Naive thymus-derived CD4-positive, alpha-beta T cell (primary cell): ENCODE measurements at regions of chr1 and their contacts with region 1.

Region 1: GRCh38 chr1:167401260-167401873 is 117.0 kb downstream of the CD247 start:
- DNase-seq: peak in 8 of 9 donors; percentile 28 to 55 (median 40)
- ATAC-seq: peak; percentile 75
- H3K4me3 ChIP-seq: no peak overlapping the region
- H3K4me3 Mint-ChIP-seq: no peak overlapping the region
- H3K27ac ChIP-seq: no peak overlapping the region
- H3K27ac Mint-ChIP-seq: peak overlapping the region in 2 of 9 donors; percentile 23 to 69
- H3K4me1 ChIP-seq: no peaks in the 10 kb centered on the region
- H3K4me1 Mint-ChIP-seq: peaks cover 0 to 13% (median 9%) of the 10 kb centered on the region in 7 donors
- H3K27me3 ChIP-seq: no peaks in the 10 kb centered on the region
- H3K27me3 Mint-ChIP-seq: no peaks in the 10 kb centered on the region

Region 2: DNA sequence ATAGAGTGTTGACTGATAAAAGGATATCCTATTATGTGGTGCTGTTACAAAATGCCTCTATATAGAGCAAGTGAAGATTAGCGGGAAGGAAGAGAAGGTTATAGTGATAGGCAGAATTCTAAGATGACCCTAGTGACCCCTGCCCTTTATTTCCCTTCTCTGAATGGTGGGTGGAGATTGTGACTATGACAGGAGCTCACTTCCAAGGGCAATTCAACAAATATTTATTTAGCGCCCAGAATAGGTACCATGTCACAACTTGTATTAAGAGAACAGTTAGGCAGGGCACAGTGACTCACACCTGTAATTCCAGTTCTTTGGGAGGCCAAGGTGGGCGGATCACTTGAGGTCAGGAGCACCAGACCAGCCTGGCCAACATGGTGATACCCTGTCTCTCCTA is 798.1 kb before region 1 on chr1:
- CTCF ChIA-PET with region 1: no interaction called
- POLR2A ChIA-PET with region 1: no interaction called
- intact Hi-C with region 1: no loop called
- DNase-seq: no peak
- ATAC-seq: no peak
- H3K4me3 ChIP-seq: no peak overlapping the region
- H3K4me3 Mint-ChIP-seq: no peak overlapping the region
- H3K27ac ChIP-seq: no peak overlapping the region
- H3K27ac Mint-ChIP-seq: no peak overlapping the region
- H3K4me1 ChIP-seq: no peaks in the 10 kb centered on the region
- H3K4me1 Mint-ChIP-seq: no peaks in the 10 kb centered on the region
- H3K27me3 ChIP-seq: no peaks in the 10 kb centered on the region
- H3K27me3 Mint-ChIP-seq: peaks cover 2 to 24% (median 11%) of the 10 kb centered on the region in 5 donors

Region 3: DNA sequence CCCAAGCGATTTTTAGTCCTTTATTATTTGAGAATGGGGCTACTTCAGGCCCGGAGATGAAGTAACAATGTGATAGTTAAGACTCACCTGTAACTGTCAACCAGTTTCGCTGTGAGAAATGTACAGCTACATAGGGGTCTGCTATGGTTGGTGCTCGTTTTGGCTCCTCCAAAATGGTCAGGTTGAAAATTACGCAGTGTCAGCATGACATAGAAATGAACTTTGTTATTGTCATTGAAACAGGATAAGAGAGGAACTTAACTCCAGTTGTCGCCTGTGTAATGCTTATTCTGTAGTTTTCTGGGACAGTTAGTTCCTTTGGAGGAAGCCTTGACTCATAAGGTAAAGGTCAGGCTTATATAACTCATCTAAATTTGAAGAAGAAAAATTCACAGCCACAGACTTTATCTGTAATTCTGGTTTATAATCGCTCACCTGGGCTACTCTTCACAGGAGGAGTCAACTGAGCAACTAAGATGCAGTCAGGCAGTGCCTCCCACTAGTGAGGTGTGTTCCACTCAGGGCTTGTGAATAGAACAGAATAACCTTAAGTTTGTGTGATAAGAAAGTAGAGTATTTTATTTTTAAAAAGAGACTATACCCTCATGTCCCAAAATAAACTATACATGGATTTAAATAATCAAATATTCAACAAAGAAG is 14.0 kb before region 1 on chr1:
- CTCF ChIA-PET with region 1: no interaction called
- POLR2A ChIA-PET with region 1: interaction called, 6 read pairs
- intact Hi-C with region 1: loop called in 1 of 2 experiments (anchors 1 kb)
- DNase-seq: no peak
- ATAC-seq: no peak
- H3K4me3 ChIP-seq: no peak overlapping the region
- H3K4me3 Mint-ChIP-seq: no peak overlapping the region
- H3K27ac ChIP-seq: no peak overlapping the region
- H3K27ac Mint-ChIP-seq: peak overlapping the region in 3 of 9 donors; percentile 12 to 53 (median 36)
- H3K4me1 ChIP-seq: no peaks in the 10 kb centered on the region
- H3K4me1 Mint-ChIP-seq: no peaks in the 10 kb centered on the region
- H3K27me3 ChIP-seq: no peaks in the 10 kb centered on the region
- H3K27me3 Mint-ChIP-seq: no peaks in the 10 kb centered on the region

Region 4: DNA sequence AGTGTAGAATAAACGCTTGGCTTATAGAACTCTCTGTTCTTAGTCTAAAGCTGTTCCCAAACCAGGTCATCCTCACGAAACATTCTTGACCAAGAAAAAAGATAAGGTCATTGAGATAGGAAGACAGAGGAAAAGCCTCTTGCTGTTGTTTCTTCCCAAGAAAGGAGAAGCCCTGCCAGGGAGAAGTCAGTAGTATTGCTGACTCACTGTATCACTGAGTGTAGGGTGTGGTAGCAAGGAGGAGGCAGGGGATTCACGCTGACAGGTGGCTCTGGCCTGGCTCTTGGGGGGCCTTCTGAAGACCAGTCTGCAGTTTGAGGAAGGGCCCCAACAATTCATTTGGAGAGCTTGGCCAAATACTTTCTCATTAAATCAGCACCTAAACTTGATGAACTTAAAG is 19.1 kb after region 1 on chr1:
- CTCF ChIA-PET with region 1: no interaction called
- POLR2A ChIA-PET with region 1: no interaction called
- intact Hi-C with region 1: no loop called
- DNase-seq: no peak
- ATAC-seq: no peak
- H3K4me3 ChIP-seq: no peak overlapping the region
- H3K4me3 Mint-ChIP-seq: no peak overlapping the region
- H3K27ac ChIP-seq: no peak overlapping the region
- H3K27ac Mint-ChIP-seq: peak overlapping the region in 1 of 9 donors; percentile 31
- H3K4me1 ChIP-seq: no peaks in the 10 kb centered on the region
- H3K4me1 Mint-ChIP-seq: peaks cover 0 to 25% (median 4%) of the 10 kb centered on the region in 7 donors
- H3K27me3 ChIP-seq: no peaks in the 10 kb centered on the region
- H3K27me3 Mint-ChIP-seq: no peaks in the 10 kb centered on the region

Region 5: DNA sequence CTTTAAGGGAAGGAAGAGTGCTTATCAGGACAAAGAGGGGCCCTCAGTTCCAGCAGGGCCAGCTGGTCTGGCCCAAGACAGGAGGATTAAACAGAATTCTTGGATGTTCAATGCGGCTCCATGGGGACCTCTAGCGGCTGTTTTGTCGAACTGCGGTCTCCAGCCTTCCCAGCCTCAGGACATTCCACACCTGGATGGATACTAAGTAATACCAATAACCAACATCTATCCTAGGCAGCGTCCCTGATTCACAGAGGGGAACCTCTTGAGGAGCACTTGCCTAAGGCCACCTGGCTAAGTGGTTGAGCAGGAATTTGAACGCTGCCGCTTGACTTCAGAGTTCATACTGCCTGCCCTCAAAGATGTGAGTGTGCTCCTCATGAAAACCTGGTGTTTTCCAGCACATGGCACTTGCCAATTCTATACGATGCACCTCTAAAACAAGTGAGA is 132.5 kb after region 1 on chr1:
- CTCF ChIA-PET with region 1: interaction called, 41 read pairs
- POLR2A ChIA-PET with region 1: no interaction called
- intact Hi-C with region 1: loop called (anchors 1 kb)
- DNase-seq: peak in 8 of 9 donors; percentile 50 to 72 (median 58)
- ATAC-seq: peak; percentile 87
- H3K4me3 ChIP-seq: no peak overlapping the region
- H3K4me3 Mint-ChIP-seq: no peak overlapping the region
- H3K27ac ChIP-seq: no peak overlapping the region
- H3K27ac Mint-ChIP-seq: peak overlapping the region in 1 of 9 donors; percentile 30
- H3K4me1 ChIP-seq: no peaks in the 10 kb centered on the region
- H3K4me1 Mint-ChIP-seq: peaks cover 0 to 11% (median 2%) of the 10 kb centered on the region in 7 donors
- H3K27me3 ChIP-seq: no peaks in the 10 kb centered on the region
- H3K27me3 Mint-ChIP-seq: peaks cover 0 to 3% (median 0%) of the 10 kb centered on the region in 5 donors

Region 6: DNA sequence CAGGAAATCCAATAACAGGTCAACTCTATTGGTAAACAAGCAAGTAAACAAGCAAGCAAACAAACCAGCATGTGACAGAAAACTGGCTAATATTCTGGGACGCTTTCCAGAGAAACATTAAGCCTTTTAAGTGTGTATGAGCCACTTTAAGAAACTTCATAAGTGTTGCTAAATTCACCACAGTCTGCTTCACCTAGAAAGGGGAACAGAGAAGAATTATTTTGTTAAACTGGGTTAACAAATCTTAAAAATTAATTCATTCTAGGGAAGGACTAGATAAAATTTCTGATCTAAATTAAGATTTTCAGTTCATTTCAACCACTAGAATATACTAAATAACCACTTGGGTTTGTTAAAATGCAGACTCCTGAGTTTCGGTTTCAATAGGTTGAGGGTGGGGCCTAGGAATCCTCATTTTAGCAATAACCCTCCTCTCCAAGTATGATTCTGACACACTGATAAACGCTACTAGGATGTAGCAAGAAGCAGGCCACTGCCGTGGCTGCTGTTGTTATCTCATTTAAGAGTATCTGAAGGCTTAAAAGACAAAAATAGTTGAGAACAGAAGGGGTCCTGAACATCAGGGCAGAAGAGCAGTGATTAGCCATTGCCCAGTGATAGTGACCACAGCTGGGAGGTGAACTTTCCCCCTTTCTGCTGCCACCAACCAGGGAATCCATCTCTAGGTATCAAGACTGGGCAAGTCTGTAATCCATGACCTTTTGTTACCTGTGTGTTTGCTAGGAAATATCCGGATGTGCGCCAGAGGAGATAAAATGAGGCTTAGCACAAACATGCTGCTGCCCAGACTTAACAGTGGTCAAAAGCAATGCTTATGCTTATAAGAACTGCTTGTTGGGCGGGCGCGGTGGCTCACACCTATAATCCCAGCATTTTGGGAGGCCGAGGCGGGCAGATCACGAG is 141.0 kb after region 1 on chr1:
- CTCF ChIA-PET with region 1: interaction called, 18 read pairs
- POLR2A ChIA-PET with region 1: interaction called, 3 read pairs
- intact Hi-C with region 1: loop called (anchors 1 to 2 kb)
- DNase-seq: no peak
- ATAC-seq: no peak
- H3K4me3 ChIP-seq: no peak overlapping the region
- H3K4me3 Mint-ChIP-seq: peak overlapping the region in 1 of 10 donors; percentile 15
- H3K27ac ChIP-seq: no peak overlapping the region
- H3K27ac Mint-ChIP-seq: peak overlapping the region in 2 of 9 donors; percentile 33 to 68
- H3K4me1 ChIP-seq: no peaks in the 10 kb centered on the region
- H3K4me1 Mint-ChIP-seq: peaks cover 3 to 56% (median 5%) of the 10 kb centered on the region in 7 donors
- H3K27me3 ChIP-seq: no peaks in the 10 kb centered on the region
- H3K27me3 Mint-ChIP-seq: no peaks in the 10 kb centered on the region